Uterus (tissue), 4 donors: ENCODE measurements at regions of chr4 and their contacts with region 1.

Region 1: GRCh38 chr4:187598196-187598595 is 397.4 kb upstream of the ZFP42 start:
- DNase-seq: no peak
- H3K4me3 ChIP-seq: no peak overlapping the region
- H3K27ac ChIP-seq: no peak overlapping the region
- H3K4me1 ChIP-seq: no peaks in the 10 kb centered on the region
- H3K27me3 ChIP-seq: no peaks in the 10 kb centered on the region
- CTCF ChIP-seq: no peak
- POLR2A ChIP-seq: no peak

Region 2: GRCh38 chr4:187562345-187562744 is 35.9 kb before region 1 on chr4:
- intact Hi-C with region 1: loop called (anchors 2 kb)
- DNase-seq: no peak
- H3K4me3 ChIP-seq: no peak overlapping the region
- H3K27ac ChIP-seq: no peak overlapping the region
- H3K4me1 ChIP-seq: no peaks in the 10 kb centered on the region
- H3K27me3 ChIP-seq: no peaks in the 10 kb centered on the region
- CTCF ChIP-seq: no peak
- POLR2A ChIP-seq: no peak